Mammary epithelial cell (primary cell): ENCODE measurements at regions of chr2 and their contacts with region 1.

Region 1: DNA sequence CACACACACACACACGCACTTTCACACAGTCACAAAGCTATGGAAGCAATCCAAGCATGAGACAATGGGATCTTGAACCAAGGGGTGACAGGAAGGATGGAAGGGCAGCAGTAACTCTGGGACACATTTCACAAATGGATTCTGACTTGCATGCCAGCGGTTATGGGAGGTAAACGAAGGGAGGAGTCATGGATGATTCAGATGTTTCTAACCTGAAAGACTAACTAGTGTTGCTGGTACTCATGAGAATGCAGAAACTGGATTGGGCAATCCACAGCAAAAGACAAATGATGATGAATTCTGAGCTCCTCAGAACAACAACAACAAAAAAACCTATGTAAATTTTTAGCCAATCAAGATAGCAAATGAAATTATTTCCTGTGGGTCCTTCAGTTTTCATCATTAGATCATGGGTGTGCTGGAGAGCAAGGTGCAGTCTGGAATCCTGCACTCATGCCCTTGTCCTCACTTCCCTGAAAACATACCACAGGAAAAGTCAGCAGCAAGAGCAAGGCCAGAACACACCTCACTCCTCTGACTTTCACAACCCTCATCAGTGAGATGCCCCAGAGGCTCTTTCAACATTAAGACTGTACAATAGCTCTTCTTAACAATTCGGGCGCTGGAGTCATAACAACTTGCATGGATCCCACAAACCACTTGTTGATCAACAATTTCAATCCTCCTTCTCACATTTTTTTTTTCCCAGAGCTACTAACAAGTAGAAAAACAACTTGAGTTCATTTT is 32.6 kb downstream of the ABCA12 start:
- DNase-seq: peak; percentile 92
- H3K4me3 ChIP-seq: no peak overlapping the region
- H3K27ac ChIP-seq: peak overlapping the region; percentile 88
- H3K4me1 ChIP-seq: peaks cover 27% of the 10 kb centered on the region
- H3K27me3 ChIP-seq: no peaks in the 10 kb centered on the region
- CTCF ChIP-seq: no peak

Region 2: DNA sequence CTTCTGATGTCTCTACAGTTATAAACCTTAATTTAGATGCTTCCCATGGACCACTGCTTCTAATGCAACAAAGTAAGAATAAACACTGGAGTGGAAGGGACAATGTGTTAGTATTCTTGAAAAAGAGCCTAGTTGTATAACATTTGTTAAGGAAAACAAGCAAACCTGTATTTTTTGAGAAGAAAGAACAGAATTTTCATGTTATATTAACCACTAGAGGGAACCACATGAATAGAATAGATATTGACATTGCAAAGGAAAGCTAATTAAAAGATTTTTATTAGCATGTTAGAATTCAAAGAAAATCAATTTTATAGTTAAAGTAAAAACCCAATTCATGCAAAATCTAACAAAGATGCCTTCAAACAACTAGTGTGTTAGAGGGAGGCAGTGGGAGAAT is 145.1 kb before region 1 on chr2:
- CTCF ChIA-PET with region 1: no interaction called
- dilution Hi-C with region 1: no loop called
- in situ Hi-C with region 1: no loop called
- intact Hi-C with region 1: no loop called
- DNase-seq: peak; percentile 0
- H3K4me3 ChIP-seq: no peak overlapping the region
- H3K27ac ChIP-seq: no peak overlapping the region
- H3K4me1 ChIP-seq: no peaks in the 10 kb centered on the region
- H3K27me3 ChIP-seq: no peaks in the 10 kb centered on the region
- CTCF ChIP-seq: peak; percentile 26

Region 3: DNA sequence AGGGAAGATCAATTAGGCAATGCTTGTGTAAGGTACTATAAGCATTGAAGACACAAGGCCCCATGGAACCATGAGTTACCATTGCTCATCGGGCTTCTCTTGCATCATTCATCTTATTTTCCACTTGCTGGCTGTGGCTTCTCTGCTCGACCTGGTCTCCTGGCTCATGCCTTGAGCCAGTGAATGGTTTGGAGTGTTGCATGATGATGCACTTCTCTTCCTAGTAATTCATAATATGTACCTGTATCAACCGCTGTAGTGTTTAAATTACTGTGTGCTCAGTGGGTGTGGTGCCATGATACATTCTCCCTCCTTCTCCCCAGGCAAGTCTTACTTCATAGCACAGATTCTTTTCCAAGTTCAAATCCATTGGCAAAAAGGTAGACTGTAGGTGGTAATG is 34.1 kb before region 1 on chr2:
- CTCF ChIA-PET with region 1: no interaction called
- dilution Hi-C with region 1: no loop called
- in situ Hi-C with region 1: no loop called
- intact Hi-C with region 1: loop called (anchors 2 kb)
- DNase-seq: peak; percentile 96
- H3K4me3 ChIP-seq: no peak overlapping the region
- H3K27ac ChIP-seq: peak overlapping the region; percentile 73
- H3K4me1 ChIP-seq: peaks cover 12% of the 10 kb centered on the region
- H3K27me3 ChIP-seq: no peaks in the 10 kb centered on the region
- CTCF ChIP-seq: no peak

Region 4: DNA sequence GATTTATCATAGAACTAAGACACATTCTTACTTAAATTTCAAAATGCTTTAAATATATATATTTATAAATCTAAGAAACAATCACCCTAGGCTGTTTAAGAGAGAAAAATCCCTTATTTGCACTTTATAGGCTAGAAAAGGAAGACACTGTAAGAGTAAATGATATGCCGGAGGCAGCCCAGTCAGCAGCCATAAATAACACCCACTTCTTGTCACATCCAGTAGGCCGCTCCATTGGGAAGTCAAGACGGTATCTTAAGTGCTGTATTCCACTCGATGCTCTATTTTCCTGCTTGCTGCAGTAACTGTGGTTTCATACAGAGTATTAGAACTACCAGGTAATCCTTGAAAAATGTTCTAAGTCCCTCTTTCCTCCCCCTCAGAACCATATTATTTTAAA is 25.2 kb before region 1 on chr2:
- CTCF ChIA-PET with region 1: no interaction called
- dilution Hi-C with region 1: no loop called
- in situ Hi-C with region 1: no loop called
- intact Hi-C with region 1: loop called (anchors 2 kb)
- DNase-seq: no peak
- H3K4me3 ChIP-seq: no peak overlapping the region
- H3K27ac ChIP-seq: no peak overlapping the region
- H3K4me1 ChIP-seq: no peaks in the 10 kb centered on the region
- H3K27me3 ChIP-seq: no peaks in the 10 kb centered on the region
- CTCF ChIP-seq: no peak

Region 5: DNA sequence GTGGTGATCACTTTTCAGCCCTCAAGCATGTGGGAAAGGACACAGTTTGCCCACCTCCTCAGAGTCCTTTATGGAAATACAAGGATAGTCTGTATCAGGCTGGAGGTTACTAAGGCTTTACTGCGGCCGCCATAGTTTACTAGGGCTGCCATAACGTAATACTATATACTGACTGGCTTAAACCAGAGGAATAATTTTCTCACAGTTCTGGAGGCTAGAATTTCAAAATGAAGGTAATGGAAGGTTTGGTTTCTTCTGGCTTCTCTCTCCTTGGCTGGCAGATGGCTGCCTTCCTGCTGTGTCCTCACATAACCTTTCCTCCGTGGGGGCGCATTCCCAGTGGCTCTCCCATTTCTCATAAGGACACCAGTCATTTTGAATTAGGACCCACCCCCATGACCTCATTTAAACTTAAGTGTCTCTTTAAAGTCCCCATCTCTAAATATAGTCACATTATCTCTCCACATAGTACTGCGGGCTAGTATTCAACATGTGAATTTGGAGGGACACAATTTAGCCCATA is 193.6 kb after region 1 on chr2:
- CTCF ChIA-PET with region 1: interaction called, 15 read pairs
- dilution Hi-C with region 1: no loop called
- in situ Hi-C with region 1: no loop called
- intact Hi-C with region 1: no loop called
- DNase-seq: no peak
- H3K4me3 ChIP-seq: no peak overlapping the region
- H3K27ac ChIP-seq: no peak overlapping the region
- H3K4me1 ChIP-seq: no peaks in the 10 kb centered on the region
- H3K27me3 ChIP-seq: no peaks in the 10 kb centered on the region
- CTCF ChIP-seq: no peak